Mammary epithelial cell (primary cell): ENCODE measurements at regions of chr16 and their contacts with region 1.

Region 1: GRCh38 chr16:61295311-61295710 is 740.9 kb downstream of the CDH8 start:
- DNase-seq: peak; percentile 16
- H3K4me3 ChIP-seq: no peak overlapping the region
- H3K27ac ChIP-seq: no peak overlapping the region
- H3K4me1 ChIP-seq: no peaks in the 10 kb centered on the region
- H3K27me3 ChIP-seq: no peaks in the 10 kb centered on the region
- CTCF ChIP-seq: no peak

Region 2: DNA sequence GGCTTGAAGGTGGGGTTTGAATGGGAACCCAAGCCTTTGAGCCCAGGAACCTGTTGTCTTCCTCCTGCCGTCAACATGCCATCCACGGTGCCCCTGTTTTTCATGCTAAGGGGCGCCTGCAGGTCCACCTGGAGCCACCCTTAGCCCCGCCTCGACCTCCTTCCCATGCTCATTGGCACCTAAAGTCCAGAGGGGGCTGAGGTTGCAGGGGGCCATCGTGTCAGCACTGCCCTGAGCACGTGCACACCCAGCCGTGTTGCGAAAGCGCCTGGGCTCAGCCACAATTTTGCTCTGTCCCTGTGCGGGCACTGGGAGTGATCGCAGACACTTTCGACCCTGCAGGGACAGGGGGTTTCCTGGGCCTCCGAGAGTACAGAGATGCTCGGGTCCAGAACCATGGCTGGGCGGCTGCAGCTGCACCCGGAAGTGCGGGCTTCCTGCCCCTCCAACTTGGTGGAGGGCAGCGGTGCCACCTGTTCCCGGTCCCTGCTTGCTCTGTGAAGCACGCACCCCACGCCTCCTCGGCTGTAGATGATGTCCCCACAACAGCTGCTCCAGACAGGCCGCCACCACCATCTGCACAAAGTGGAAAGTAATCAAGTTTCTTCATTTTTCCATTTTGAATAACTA is 286.2 kb after region 1 on chr16:
- CTCF ChIA-PET with region 1: interaction called, 23 read pairs
- dilution Hi-C with region 1: no loop called
- in situ Hi-C with region 1: no loop called
- intact Hi-C with region 1: no loop called
- DNase-seq: no peak
- H3K4me3 ChIP-seq: no peak overlapping the region
- H3K27ac ChIP-seq: no peak overlapping the region
- H3K4me1 ChIP-seq: no peaks in the 10 kb centered on the region
- H3K27me3 ChIP-seq: no peaks in the 10 kb centered on the region
- CTCF ChIP-seq: no peak

Region 3: DNA sequence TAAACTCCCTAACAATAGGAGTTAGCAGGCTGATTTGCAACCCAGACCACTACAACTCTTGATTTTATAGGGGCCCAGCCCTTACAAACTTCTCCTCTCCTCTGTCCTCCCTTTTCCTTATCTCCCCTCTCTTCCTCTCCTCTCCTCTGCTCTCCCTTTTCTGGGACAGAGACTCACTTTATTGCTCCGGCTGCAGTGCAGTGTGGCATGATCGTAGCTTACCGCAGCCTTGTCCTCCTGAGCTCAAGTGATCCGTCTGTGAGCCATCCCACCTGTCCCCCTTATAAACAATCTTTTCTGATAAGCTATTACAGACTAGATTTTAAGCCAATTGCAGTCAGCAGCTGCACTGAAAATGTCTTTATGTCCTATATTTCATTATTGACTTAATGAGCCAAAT is 322.1 kb after region 1 on chr16:
- CTCF ChIA-PET with region 1: no interaction called
- dilution Hi-C with region 1: no loop called
- in situ Hi-C with region 1: no loop called
- intact Hi-C with region 1: no loop called
- DNase-seq: no peak
- H3K4me3 ChIP-seq: no peak overlapping the region
- H3K27ac ChIP-seq: no peak overlapping the region
- H3K4me1 ChIP-seq: no peaks in the 10 kb centered on the region
- H3K27me3 ChIP-seq: no peaks in the 10 kb centered on the region
- CTCF ChIP-seq: no peak

Region 4: DNA sequence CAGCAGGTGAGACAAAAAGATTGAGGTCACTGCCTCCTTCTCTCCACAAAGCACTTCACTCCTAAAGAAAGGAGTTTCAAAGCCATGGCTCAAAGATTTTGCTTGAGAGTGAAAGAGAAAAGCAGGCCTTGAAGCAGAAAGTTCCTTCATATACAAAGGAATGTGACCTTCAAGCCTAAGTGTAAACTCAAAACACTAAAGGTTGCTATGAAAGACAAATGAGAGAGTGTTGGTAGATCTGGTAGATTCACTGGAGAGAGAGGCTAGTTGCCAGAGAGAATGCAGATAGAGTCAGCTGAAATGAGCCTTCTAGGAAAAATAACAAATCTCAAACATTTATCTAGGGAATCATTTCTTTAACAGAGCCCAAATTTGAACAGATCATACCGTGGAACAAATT is 435.7 kb after region 1 on chr16:
- CTCF ChIA-PET with region 1: interaction called, 12 read pairs
- dilution Hi-C with region 1: no loop called
- in situ Hi-C with region 1: no loop called
- intact Hi-C with region 1: no loop called
- DNase-seq: no peak
- H3K4me3 ChIP-seq: no peak overlapping the region
- H3K27ac ChIP-seq: no peak overlapping the region
- H3K4me1 ChIP-seq: no peaks in the 10 kb centered on the region
- H3K27me3 ChIP-seq: no peaks in the 10 kb centered on the region
- CTCF ChIP-seq: no peak

Region 5: DNA sequence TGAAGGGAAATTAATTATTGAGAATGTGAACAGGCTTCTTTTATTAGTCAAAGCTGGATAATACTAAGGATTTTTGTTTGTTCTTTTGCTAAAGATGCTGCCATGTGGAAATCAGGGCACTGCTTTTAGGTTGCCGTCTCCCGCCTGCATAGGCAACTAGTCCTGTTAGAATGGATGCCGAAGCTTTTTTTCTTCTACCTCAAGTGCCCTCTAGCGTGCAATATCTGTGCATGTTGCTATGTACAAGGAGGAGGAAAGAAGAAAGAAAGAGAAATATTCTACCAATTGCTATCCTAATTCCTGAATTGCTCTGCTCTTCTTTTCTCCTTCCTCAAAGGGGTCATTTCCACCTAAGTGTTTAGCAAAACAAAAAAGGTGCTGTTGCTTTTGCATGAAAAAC is 746.1 kb after region 1 on chr16:
- CTCF ChIA-PET with region 1: interaction called, 7 read pairs
- dilution Hi-C with region 1: no loop called
- in situ Hi-C with region 1: no loop called
- intact Hi-C with region 1: loop called (anchors 5 kb)
- DNase-seq: peak; percentile 27
- H3K4me3 ChIP-seq: no peak overlapping the region
- H3K27ac ChIP-seq: no peak overlapping the region
- H3K4me1 ChIP-seq: peaks cover 8% of the 10 kb centered on the region
- H3K27me3 ChIP-seq: peaks cover 10% of the 10 kb centered on the region
- CTCF ChIP-seq: peak; percentile 52 to 73

Region 6: DNA sequence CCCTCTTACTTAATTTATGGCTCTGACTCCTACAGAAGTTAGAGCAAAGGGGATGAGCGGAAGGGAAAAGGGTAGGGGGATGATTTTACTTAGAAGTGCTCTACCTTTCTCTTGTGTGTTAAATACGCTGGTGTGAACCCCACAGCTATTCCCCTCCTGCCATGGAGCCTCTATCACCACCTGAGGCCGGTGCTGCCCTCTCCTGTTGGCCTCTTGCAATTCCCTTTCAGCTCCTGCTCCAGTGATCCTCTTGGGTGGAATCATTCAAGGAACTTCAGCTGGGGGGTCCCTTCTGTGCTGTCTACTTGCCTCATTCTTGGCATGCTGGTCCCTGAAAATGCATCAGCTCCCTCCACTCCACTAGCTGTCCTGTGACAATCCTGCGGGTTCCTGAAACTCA is 782.7 kb after region 1 on chr16:
- CTCF ChIA-PET with region 1: interaction called, 13 read pairs
- dilution Hi-C with region 1: no loop called
- in situ Hi-C with region 1: no loop called
- intact Hi-C with region 1: no loop called
- DNase-seq: no peak
- H3K4me3 ChIP-seq: no peak overlapping the region
- H3K27ac ChIP-seq: no peak overlapping the region
- H3K4me1 ChIP-seq: no peaks in the 10 kb centered on the region
- H3K27me3 ChIP-seq: no peaks in the 10 kb centered on the region
- CTCF ChIP-seq: peak; percentile 26 to 42